Activated B cell treated with CpG ODN at 0.5 μM for 24 hours (primary cell): ENCODE measurements at regions of chr1 and their contacts with region 1.

Region 1: GRCh38 chr1:89632657-89633247 is at the start of gene LRRC8C:
- DNase-seq: peak; percentile 93
- ATAC-seq: peak; percentile 88
- H3K4me3 Mint-ChIP-seq: peak within 1 kb of the TSS; percentile 94
- H3K27ac Mint-ChIP-seq: peak within 1 kb of the TSS; percentile 95
- H3K4me1 Mint-ChIP-seq: peaks cover 33% of the 10 kb centered on the region
- H3K27me3 Mint-ChIP-seq: no peaks in the 10 kb centered on the region
- CTCF ChIP-seq: no peak
- total RNA-seq, gene LRRC8C: 7.4 and 8.4 TPM in 2 replicates

Region 2: DNA sequence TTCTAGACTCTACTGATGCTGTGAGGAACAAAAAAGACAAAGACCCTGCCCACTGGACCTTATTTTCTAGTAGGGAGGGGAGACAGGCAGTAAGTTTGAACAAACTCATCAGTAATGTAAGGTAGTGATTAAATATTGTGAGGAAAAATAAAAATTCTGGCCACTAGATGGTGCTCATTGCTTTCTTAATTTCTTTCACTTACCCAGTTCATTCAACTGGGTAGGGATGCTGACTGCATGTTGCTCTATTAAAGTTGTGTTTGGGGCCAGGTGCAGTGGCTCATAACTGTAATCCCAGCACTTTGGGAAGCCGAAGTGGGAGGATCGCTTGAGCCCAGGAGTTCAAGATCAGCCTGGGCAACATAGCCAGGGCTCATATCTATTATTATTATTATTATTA is 634.0 kb before region 1 on chr1:
- CTCF ChIA-PET with region 1: no interaction called
- POLR2A ChIA-PET with region 1: interaction called, 10 read pairs
- intact Hi-C with region 1: no loop called
- DNase-seq: no peak
- ATAC-seq: peak; percentile 88
- H3K4me3 Mint-ChIP-seq: no peak overlapping the region
- H3K27ac Mint-ChIP-seq: no peak overlapping the region
- H3K4me1 Mint-ChIP-seq: peaks cover 6% of the 10 kb centered on the region
- H3K27me3 Mint-ChIP-seq: no peaks in the 10 kb centered on the region
- CTCF ChIP-seq: no peak

Region 3: GRCh38 chr1:89615676-89616598 is 16.8 kb before region 1 on chr1:
- CTCF ChIA-PET with region 1: interaction called, 13 read pairs
- POLR2A ChIA-PET with region 1: interaction called, 3 read pairs
- intact Hi-C with region 1: loop called (anchors 1 kb)
- DNase-seq: no peak
- ATAC-seq: peak; percentile 72
- H3K4me3 Mint-ChIP-seq: no peak overlapping the region
- H3K27ac Mint-ChIP-seq: no peak overlapping the region
- H3K4me1 Mint-ChIP-seq: peaks cover 12% of the 10 kb centered on the region
- H3K27me3 Mint-ChIP-seq: no peaks in the 10 kb centered on the region
- CTCF ChIP-seq: no peak

Region 4: GRCh38 chr1:89692601-89693521 is 60.1 kb after region 1 on chr1:
- CTCF ChIA-PET with region 1: no interaction called
- POLR2A ChIA-PET with region 1: interaction called, 4 read pairs
- intact Hi-C with region 1: loop called (anchors 1 kb)
- DNase-seq: no peak
- ATAC-seq: peak; percentile 79
- H3K4me3 Mint-ChIP-seq: peak overlapping the region; percentile 44
- H3K27ac Mint-ChIP-seq: peak overlapping the region; percentile 80
- H3K4me1 Mint-ChIP-seq: peaks cover 59% of the 10 kb centered on the region
- H3K27me3 Mint-ChIP-seq: no peaks in the 10 kb centered on the region
- CTCF ChIP-seq: no peak

Region 5: GRCh38 chr1:89762779-89763648 is 130.3 kb after region 1 on chr1:
- CTCF ChIA-PET with region 1: interaction called, 193 read pairs
- POLR2A ChIA-PET with region 1: interaction called, 30 read pairs
- intact Hi-C with region 1: loop called (anchors 1 kb)
- DNase-seq: peak; percentile 79
- ATAC-seq: peak; percentile 100
- H3K4me3 Mint-ChIP-seq: peak overlapping the region; percentile 87
- H3K27ac Mint-ChIP-seq: peak overlapping the region; percentile 70
- H3K4me1 Mint-ChIP-seq: peaks cover 18% of the 10 kb centered on the region
- H3K27me3 Mint-ChIP-seq: peaks cover 4% of the 10 kb centered on the region
- CTCF ChIP-seq: peak; percentile 52

Region 6: DNA sequence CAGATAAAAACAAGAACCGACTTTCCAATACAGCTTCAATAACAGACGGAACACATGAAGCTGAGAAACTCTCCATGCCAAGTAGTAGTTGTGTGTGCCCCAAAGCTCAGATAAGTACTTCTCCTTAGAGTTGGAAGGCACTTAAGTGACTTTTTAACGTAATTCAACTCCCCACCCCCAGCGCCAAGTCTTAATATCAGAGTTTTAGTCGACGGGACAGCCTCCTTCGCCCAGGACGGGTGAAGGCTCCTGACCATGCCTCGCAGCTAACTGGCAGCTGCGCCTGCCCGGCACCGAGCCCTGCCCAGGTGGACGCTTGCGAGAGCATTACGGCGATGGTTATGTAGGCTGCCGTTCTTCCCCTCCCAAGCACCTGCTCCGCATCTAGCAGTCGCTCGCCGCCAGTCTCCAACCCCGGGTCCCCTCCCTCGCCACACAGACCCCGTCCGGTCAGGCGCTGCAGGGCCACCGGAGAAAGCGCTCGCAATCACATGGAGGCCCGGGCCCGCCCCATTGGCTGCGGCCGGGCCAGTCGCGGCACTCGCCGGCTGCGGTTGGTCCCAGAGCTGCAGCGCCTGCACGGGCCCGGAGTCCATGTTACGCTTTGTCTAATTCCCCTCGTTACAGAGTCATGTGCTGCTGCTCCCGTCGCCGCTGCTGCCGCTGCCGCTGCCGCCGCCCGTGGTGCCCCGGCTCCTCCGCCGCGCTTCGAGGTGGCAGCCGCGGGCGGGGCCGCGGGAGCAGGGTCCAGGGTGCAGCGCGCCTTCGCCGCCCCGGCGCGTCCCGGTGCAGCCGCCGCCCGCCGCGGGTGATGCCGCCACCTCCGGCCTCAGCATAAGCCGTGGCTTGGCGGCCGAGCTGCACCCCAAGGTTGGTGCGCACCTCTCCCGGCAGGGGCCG is 187.9 kb after region 1 on chr1 and contains the start of gene LRRC8D:
- CTCF ChIA-PET with region 1: no interaction called
- POLR2A ChIA-PET with region 1: no interaction called
- intact Hi-C with region 1: loop called (anchors 1 kb)
- DNase-seq: peak; percentile 67
- ATAC-seq: peak; percentile 66
- H3K4me3 Mint-ChIP-seq: peak within 1 kb of the TSS; percentile 95
- H3K27ac Mint-ChIP-seq: peak within 1 kb of the TSS; percentile 96
- H3K4me1 Mint-ChIP-seq: peaks cover 48% of the 10 kb centered on the region
- H3K27me3 Mint-ChIP-seq: no peaks in the 10 kb centered on the region
- CTCF ChIP-seq: no peak
- total RNA-seq, gene LRRC8D: 31.3 and 36.0 TPM in 2 replicates

Region 7: GRCh38 chr1:89994805-89995597 is 362.2 kb after region 1 on chr1 and contains the start of gene ZNF326:
- CTCF ChIA-PET with region 1: no interaction called
- POLR2A ChIA-PET with region 1: no interaction called
- intact Hi-C with region 1: loop called (anchors 1 kb)
- DNase-seq: peak; percentile 98
- ATAC-seq: peak; percentile 97
- H3K4me3 Mint-ChIP-seq: peak within 1 kb of the TSS; percentile 94
- H3K27ac Mint-ChIP-seq: peak within 1 kb of the TSS; percentile 88
- H3K4me1 Mint-ChIP-seq: peaks cover 32% of the 10 kb centered on the region
- H3K27me3 Mint-ChIP-seq: no peaks in the 10 kb centered on the region
- CTCF ChIP-seq: no peak
- total RNA-seq, gene ZNF326: 26.2 and 30.3 TPM in 2 replicates